Mammary epithelial cell (primary cell): ENCODE measurements at regions of chr6 and their contacts with region 1.

Region 1: DNA sequence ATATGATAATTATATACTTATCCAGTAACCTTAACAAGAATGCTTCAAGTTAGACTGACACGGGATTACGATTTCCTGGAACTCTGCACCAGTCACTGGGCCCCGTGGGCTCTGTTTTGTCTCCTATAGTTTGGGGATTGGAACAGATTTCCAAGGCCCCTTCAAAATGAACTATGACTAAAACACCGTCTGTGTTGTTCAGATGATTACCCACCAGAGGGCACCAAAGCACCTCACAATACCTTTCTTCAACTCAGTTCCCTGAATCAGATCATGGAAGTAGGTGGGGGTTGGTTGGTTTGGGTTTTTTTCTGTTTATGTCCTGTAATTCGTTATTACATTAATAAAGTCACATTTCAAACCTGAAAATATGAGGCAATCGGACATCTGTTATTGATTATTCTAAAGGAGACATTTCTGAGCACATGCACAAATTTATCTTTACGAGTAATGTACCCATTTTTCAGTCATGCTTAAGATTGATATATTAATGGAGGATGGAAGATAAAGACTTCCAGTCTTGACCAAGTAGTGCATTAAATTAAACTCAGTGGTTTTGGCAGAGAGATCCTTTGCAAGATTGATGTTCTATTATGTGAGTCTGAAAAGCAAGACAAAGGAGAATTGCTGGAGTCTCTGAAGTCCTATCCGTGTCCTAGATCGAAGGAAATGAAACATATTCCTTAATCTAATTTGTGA is 112.0 kb upstream of the COL21A1 start:
- DNase-seq: peak; percentile 60
- H3K4me3 ChIP-seq: no peak overlapping the region
- H3K27ac ChIP-seq: no peak overlapping the region
- H3K4me1 ChIP-seq: peaks cover 35% of the 10 kb centered on the region
- H3K27me3 ChIP-seq: no peaks in the 10 kb centered on the region
- CTCF ChIP-seq: peak; percentile 67 to 72

Region 2: GRCh38 chr6:55980627-55981211 is 378.6 kb before region 1 on chr6:
- CTCF ChIA-PET with region 1: no interaction called
- dilution Hi-C with region 1: no loop called
- in situ Hi-C with region 1: no loop called
- intact Hi-C with region 1: no loop called
- DNase-seq: peak; percentile 8
- H3K4me3 ChIP-seq: no peak overlapping the region
- H3K27ac ChIP-seq: no peak overlapping the region
- H3K4me1 ChIP-seq: no peaks in the 10 kb centered on the region
- H3K27me3 ChIP-seq: peaks cover 2% of the 10 kb centered on the region
- CTCF ChIP-seq: peak; percentile 42 to 65

Region 3: DNA sequence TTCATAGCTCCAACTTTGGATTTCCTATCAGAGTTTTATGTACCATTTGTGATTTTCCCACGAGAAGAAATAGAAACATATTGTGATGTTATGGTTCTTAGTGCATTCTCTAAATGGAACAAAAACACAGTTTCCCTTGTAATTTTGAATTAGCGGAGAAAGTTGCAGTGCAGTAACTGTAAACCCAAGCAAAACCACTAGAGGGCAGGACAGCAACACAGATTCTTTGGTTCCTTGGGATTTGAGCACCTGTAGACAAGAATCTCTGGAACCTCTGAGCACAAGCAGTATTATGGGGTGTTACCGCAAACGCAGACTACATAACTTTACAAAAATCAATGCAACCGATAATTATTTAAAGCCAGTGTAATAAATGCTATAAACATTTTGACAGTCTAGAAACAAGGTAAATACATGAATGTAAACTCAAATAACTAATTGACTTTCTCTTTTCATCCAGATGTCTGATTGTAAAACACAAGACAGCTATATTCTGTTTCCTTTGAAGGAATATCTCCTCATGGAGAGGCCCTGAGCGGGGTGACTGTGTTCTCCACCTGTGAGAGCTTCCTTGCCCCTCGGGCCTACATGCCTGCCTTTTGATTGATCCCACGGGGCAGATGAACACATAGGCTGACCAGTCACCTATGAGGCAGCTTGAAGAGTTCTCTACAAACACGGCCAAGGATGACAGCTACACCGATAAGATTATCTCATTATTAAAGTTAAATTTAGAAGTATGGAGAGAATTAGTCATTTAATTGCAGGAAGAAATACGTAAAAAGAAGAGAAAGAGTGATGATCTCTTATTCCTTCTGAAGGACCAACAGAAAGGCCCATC is 44.4 kb before region 1 on chr6:
- CTCF ChIA-PET with region 1: no interaction called
- dilution Hi-C with region 1: no loop called
- in situ Hi-C with region 1: no loop called
- intact Hi-C with region 1: loop called (anchors 2 kb)
- DNase-seq: peak; percentile 41
- H3K4me3 ChIP-seq: no peak overlapping the region
- H3K27ac ChIP-seq: no peak overlapping the region
- H3K4me1 ChIP-seq: no peaks in the 10 kb centered on the region
- H3K27me3 ChIP-seq: no peaks in the 10 kb centered on the region
- CTCF ChIP-seq: peak; percentile 86

Region 4: DNA sequence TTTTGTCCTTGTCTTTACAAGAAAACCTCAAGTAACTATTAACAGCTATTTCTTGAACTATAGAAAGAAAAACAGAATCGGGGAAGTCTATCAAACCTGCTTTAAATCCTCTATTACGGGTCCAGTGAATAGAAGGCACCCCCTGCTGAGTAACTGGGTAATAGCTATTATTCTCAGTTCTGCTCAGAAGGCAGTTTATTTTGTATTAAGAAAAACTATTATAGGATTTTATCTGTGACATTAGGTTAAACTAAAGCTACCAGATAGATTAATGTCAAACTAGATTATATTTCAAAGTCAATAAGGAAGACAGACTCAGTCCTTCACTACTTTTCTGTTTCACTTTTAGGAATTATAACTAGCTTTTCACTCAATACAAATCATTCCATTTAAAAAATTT is 189.7 kb after region 1 on chr6:
- CTCF ChIA-PET with region 1: no interaction called
- dilution Hi-C with region 1: no loop called
- in situ Hi-C with region 1: no loop called
- intact Hi-C with region 1: loop called (anchors 1 kb)
- DNase-seq: no peak
- H3K4me3 ChIP-seq: no peak overlapping the region
- H3K27ac ChIP-seq: no peak overlapping the region
- H3K4me1 ChIP-seq: no peaks in the 10 kb centered on the region
- H3K27me3 ChIP-seq: no peaks in the 10 kb centered on the region
- CTCF ChIP-seq: no peak

Region 5: GRCh38 chr6:56570413-56571359 is 211.3 kb after region 1 on chr6:
- CTCF ChIA-PET with region 1: no interaction called
- dilution Hi-C with region 1: no loop called
- in situ Hi-C with region 1: loop called (anchors 10 kb)
- intact Hi-C with region 1: loop called (anchors 1 kb)
- DNase-seq: no peak
- H3K4me3 ChIP-seq: no peak overlapping the region
- H3K27ac ChIP-seq: no peak overlapping the region
- H3K4me1 ChIP-seq: no peaks in the 10 kb centered on the region
- H3K27me3 ChIP-seq: no peaks in the 10 kb centered on the region
- CTCF ChIP-seq: peak; percentile 60 to 68

Region 6: GRCh38 chr6:56595490-56596122 is 236.3 kb after region 1 on chr6:
- CTCF ChIA-PET with region 1: interaction called, 8 read pairs
- dilution Hi-C with region 1: no loop called
- in situ Hi-C with region 1: loop called in 1 of 2 experiments (anchors 10 kb)
- intact Hi-C with region 1: loop called (anchors 1 kb)
- DNase-seq: peak; percentile 29
- H3K4me3 ChIP-seq: no peak overlapping the region
- H3K27ac ChIP-seq: no peak overlapping the region
- H3K4me1 ChIP-seq: no peaks in the 10 kb centered on the region
- H3K27me3 ChIP-seq: no peaks in the 10 kb centered on the region
- CTCF ChIP-seq: peak; percentile 56 to 61

Region 7: DNA sequence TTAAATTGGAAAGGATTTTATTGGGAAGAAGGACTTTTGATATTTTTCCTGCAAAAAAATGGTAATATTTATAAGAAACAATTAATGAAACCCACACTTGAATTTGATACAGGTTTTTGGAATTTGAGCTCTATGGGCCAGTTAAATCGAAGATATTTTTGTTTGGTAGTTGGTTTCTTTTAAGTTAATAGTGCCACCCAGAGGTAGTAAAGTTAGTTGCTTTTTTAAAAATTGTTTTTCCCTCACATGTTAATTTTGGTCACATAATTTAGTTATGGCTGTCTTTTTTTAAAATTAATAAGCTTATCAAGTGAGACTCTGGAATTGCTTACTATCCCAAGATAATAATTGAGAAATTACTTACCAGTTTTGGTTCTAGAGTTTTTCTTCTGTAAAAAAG is 965.2 kb after region 1 on chr6:
- CTCF ChIA-PET with region 1: no interaction called
- dilution Hi-C with region 1: no loop called
- in situ Hi-C with region 1: no loop called
- intact Hi-C with region 1: loop called (anchors 5 kb)
- DNase-seq: no peak
- H3K4me3 ChIP-seq: no peak overlapping the region
- H3K27ac ChIP-seq: no peak overlapping the region
- H3K4me1 ChIP-seq: peaks cover 2% of the 10 kb centered on the region
- H3K27me3 ChIP-seq: no peaks in the 10 kb centered on the region
- CTCF ChIP-seq: peak; percentile 35 to 43